Psoas muscle (tissue), 8 donors: ENCODE measurements at regions of chr5 and their contacts with region 1.

Region 1: DNA sequence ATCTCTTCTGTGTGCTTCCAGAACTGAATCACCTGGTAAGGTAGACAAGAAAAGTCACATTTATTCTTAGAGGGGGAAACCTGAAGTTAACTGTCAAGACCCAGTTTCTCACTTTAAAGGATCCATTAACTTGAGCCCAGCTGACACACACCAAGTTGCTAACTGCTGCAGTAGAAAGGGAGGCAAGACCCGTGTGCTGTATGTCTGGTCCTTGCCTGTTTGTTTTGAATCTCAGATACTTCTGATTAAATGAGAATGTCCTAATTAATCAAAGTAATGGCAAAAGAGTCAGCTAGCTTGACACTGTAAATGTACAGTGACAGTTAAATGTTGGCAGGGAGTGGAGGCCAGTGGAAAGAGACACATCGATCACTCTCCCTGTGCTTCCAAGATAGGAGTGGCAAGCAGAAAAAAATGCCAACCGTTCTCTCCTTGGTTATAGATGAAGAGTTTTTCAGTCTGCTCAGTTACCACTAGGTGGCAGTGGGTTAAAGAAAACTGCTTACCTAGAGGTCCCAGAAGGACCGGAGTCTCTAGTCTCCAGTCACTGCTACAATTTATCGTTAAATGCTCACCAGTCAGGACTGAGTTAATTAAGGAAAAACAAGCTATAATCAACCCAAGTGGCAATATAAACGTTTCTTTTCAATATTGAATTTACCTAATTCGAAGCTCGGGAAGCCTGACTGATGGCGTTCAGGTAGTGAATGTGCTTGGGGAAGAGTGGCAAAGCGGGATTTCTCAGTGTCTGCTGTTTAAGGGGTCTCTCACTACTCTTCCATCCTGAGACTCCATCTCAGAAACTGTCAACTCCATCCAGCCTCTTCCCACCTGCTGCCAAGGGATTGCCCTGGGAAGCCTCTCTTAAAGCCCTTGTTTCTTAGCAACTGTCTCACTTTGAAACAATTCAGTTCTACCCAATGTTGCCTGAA is 18.4 kb downstream of the LSM11 start:
- DNase-seq: no peak
- ATAC-seq: peak; percentile 77 to 87 (median 81)
- H3K4me3 ChIP-seq: no peak overlapping the region
- H3K27ac ChIP-seq: no peak overlapping the region
- H3K4me1 ChIP-seq: no peaks in the 10 kb centered on the region
- H3K27me3 ChIP-seq: no peaks in the 10 kb centered on the region
- CTCF ChIP-seq: peak; percentile 86

Region 2: GRCh38 chr5:157607371-157608161 is 154.4 kb before region 1 on chr5:
- intact Hi-C with region 1: no loop called
- DNase-seq: no peak
- ATAC-seq: peak in 3 of 4 donors; percentile 59 to 75 (median 63)
- H3K4me3 ChIP-seq: no peak overlapping the region
- H3K27ac ChIP-seq: no peak overlapping the region
- H3K4me1 ChIP-seq: peaks cover 7% of the 10 kb centered on the region
- H3K27me3 ChIP-seq: no peaks in the 10 kb centered on the region
- CTCF ChIP-seq: no peak

Region 3: GRCh38 chr5:157948738-157949410 is 186.9 kb after region 1 on chr5:
- intact Hi-C with region 1: loop called in 1 of 2 experiments (anchors 5 kb)
- DNase-seq: peak; percentile 81 to 85
- ATAC-seq: peak; percentile 87 to 99 (median 94)
- H3K4me3 ChIP-seq: peak overlapping the region; percentile 19
- H3K27ac ChIP-seq: no peak overlapping the region
- H3K4me1 ChIP-seq: peaks cover 7% of the 10 kb centered on the region
- H3K27me3 ChIP-seq: no peaks in the 10 kb centered on the region
- CTCF ChIP-seq: peak; percentile 88

Region 4: GRCh38 chr5:159133041-159133741 is 1371.2 kb after region 1 on chr5:
- intact Hi-C with region 1: loop called in 1 of 2 experiments (anchors 10 kb)
- DNase-seq: no peak
- ATAC-seq: peak in 3 of 4 donors; percentile 42 to 52 (median 46)
- H3K4me3 ChIP-seq: no peak overlapping the region
- H3K27ac ChIP-seq: no peak overlapping the region
- H3K4me1 ChIP-seq: no peaks in the 10 kb centered on the region
- H3K27me3 ChIP-seq: peaks cover 0 to 2% (median 0%) of the 10 kb centered on the region in 3 donors
- CTCF ChIP-seq: peak; percentile 81